CD8-positive, alpha-beta T cell (primary cell): ENCODE measurements at regions of chrX and their contacts with region 1.

Region 1: GRCh38 chrX:130902783-130903613 is at the start of gene ENOX2:
- DNase-seq: peak; percentile 50 to 94 (median 78)
- ATAC-seq: peak; percentile 95
- H3K4me3 ChIP-seq: peak within 1 kb of the TSS; percentile 84 to 94
- H3K4me3 Mint-ChIP-seq: no peak within 1 kb of the TSS
- H3K27ac ChIP-seq: peak within 1 kb of the TSS; percentile 60 to 87
- H3K27ac Mint-ChIP-seq: peak within 1 kb of the TSS; percentile 70
- H3K4me1 ChIP-seq: no peaks in the 10 kb centered on the region
- H3K4me1 Mint-ChIP-seq: peaks cover 13% of the 10 kb centered on the region
- H3K27me3 ChIP-seq: no peaks in the 10 kb centered on the region
- H3K27me3 Mint-ChIP-seq: no peaks in the 10 kb centered on the region
- CTCF ChIP-seq: no peak
- total RNA-seq, gene ENOX2: 4.0 to 4.6 TPM

Region 2: DNA sequence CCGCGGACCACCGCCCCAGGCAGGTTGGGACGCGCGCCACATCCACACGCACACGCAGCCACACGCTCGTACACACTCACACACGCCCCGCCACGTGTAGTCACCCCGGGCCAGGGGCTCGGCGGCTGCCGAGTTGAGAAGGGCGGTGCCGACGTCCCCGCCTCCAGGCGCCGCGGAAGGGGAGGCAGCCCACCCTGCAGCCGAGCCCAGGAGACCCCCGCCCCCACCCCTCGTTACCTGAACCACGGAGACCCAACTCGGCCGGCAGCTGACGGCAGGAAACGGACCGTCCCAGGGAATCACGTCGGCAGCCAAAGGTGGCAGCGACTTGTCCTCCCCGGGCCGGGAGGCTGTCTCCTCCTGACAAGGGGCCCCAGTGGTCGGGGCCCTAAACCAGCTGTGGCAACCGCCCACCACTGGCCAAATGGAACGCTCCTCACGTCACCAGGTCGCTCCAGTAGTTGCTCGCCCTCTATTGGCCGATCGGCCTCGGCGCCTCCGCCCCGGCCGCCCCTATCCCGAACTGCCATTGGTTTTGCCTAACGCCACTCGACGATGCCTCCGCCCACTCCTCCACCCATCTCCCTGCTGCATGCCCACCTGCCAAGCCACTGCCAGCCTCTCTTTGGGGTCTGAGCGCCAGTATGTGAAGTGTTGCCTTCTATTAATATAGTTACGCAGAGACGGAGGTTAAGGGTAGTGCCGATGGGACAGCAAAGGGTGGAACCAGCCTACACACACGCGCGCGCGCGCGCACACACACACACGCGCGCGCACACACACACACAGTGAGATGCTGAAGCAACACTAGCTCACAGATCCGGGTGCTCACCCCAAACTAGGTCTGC is 1059.3 kb before region 1 on chrX and contains the start of gene ZDHHC9:
- CTCF ChIA-PET with region 1: no interaction called
- POLR2A ChIA-PET with region 1: no interaction called
- intact Hi-C with region 1: loop called in 1 of 2 experiments (anchors 10 kb)
- DNase-seq: peak; percentile 70 to 91 (median 81)
- ATAC-seq: peak; percentile 96
- H3K4me3 ChIP-seq: peak within 1 kb of the TSS; percentile 67 to 73
- H3K4me3 Mint-ChIP-seq: peak within 1 kb of the TSS; percentile 86
- H3K27ac ChIP-seq: peak within 1 kb of the TSS; percentile 36 to 60
- H3K27ac Mint-ChIP-seq: peak within 1 kb of the TSS; percentile 64
- H3K4me1 ChIP-seq: peaks cover 24% of the 10 kb centered on the region
- H3K4me1 Mint-ChIP-seq: peaks cover 32% of the 10 kb centered on the region
- H3K27me3 ChIP-seq: no peaks in the 10 kb centered on the region
- H3K27me3 Mint-ChIP-seq: no peaks in the 10 kb centered on the region
- CTCF ChIP-seq: no peak
- total RNA-seq, gene ZDHHC9: 2.4 to 2.6 TPM

Region 3: GRCh38 chrX:130268500-130269170 is 634.4 kb before region 1 on chrX and contains the start of gene ZNF280C:
- CTCF ChIA-PET with region 1: no interaction called
- POLR2A ChIA-PET with region 1: no interaction called
- intact Hi-C with region 1: loop called (anchors 1 to 2 kb)
- DNase-seq: peak; percentile 76 to 94 (median 88)
- ATAC-seq: peak; percentile 94
- H3K4me3 ChIP-seq: peak within 1 kb of the TSS; percentile 73 to 74
- H3K4me3 Mint-ChIP-seq: peak within 1 kb of the TSS; percentile 88
- H3K27ac ChIP-seq: peak within 1 kb of the TSS; percentile 54 to 65
- H3K27ac Mint-ChIP-seq: peak within 1 kb of the TSS; percentile 85
- H3K4me1 ChIP-seq: peaks cover 14% of the 10 kb centered on the region
- H3K4me1 Mint-ChIP-seq: peaks cover 13% of the 10 kb centered on the region
- H3K27me3 ChIP-seq: no peaks in the 10 kb centered on the region
- H3K27me3 Mint-ChIP-seq: no peaks in the 10 kb centered on the region
- CTCF ChIP-seq: no peak
- total RNA-seq, gene ZNF280C: 4.4 to 5.2 TPM

Region 4: DNA sequence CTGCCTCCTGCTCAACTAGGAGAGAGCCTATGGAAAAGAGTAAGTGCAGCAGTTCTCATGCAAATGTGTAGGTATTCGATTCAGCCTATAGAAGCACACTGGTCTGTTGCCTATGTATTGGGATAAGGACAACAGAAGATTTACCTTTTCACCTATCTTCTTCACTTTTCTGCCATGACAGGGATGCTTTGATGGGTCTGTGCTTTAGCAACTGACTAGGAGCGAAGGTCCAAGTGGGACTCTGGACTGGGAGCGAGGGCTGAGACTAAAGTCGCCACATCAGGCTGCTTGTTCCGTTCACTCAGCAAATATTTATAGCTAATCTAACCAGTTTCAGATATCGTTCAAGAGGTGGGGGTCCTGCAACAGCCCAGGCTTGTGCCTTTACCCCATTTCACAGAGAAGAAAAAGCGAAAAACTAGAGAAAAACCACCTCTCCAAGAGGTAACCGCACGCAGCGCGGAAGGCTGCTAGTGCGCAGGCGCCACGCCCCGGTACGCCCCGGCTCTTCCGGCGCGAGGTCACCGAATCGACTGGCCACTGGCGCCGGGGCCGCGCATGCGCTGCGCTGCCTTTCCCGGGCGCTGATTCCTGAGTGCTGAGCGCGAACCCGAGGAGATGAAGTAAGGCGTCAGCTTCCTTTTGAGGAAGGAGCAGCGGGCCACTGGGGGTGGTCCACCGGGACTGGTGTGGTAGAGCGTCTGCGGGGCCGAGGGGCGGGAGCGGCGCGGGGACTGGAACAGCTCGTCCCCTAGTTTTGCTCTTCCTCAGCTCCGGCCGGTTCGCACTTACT is 501.4 kb before region 1 on chrX and contains the start of gene RBMX2:
- CTCF ChIA-PET with region 1: no interaction called
- POLR2A ChIA-PET with region 1: no interaction called
- intact Hi-C with region 1: loop called (anchors 1 to 5 kb)
- DNase-seq: peak; percentile 37 to 88 (median 68)
- ATAC-seq: peak; percentile 85
- H3K4me3 ChIP-seq: peak within 1 kb of the TSS; percentile 63 to 99
- H3K4me3 Mint-ChIP-seq: peak within 1 kb of the TSS; percentile 87
- H3K27ac ChIP-seq: peak within 1 kb of the TSS; percentile 73 to 76
- H3K27ac Mint-ChIP-seq: peak within 1 kb of the TSS; percentile 91
- H3K4me1 ChIP-seq: peaks cover 12% of the 10 kb centered on the region
- H3K4me1 Mint-ChIP-seq: peaks cover 27% of the 10 kb centered on the region
- H3K27me3 ChIP-seq: no peaks in the 10 kb centered on the region
- H3K27me3 Mint-ChIP-seq: no peaks in the 10 kb centered on the region
- CTCF ChIP-seq: no peak
- total RNA-seq, gene RBMX2: 19.4 to 20.7 TPM

Region 5: DNA sequence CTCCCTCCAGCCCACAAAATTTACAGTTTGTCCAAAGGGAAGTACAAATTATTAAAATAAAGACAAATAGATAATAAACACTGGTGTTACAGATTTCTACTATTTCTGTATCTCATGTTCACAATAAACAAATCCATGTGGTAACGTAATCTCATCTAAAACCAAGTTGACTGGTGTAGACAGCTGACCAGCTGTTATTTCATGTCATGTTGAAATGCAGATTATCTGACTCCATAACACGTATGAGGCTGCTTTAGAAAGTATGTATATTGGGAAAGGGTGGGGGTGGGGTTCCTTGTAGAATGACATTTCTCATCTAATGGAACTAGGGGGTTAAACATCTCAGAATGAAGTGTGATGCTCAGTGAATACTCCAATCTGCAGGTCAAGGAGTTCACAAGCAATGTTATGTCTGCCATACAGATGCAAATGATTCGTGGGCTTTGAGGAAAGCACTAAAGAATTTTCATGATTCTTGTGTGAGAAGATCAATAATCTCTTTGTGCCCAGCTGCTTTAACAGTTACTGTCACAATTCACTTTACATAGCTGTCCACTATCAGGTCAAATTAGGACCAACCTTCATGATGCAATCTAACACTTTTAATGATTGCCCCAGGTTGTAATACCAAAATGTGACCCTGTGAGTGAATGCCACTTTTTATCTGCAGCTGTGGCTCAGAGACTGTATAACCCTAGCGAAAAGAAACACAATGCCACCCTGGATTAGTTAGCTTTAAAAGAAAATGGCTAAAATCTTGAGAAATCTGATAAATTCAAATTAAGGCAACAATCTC is 114.0 kb before region 1 on chrX:
- CTCF ChIA-PET with region 1: no interaction called
- POLR2A ChIA-PET with region 1: no interaction called
- intact Hi-C with region 1: no loop called
- DNase-seq: no peak
- ATAC-seq: no peak
- H3K4me3 ChIP-seq: no peak overlapping the region
- H3K4me3 Mint-ChIP-seq: no peak overlapping the region
- H3K27ac ChIP-seq: no peak overlapping the region
- H3K27ac Mint-ChIP-seq: no peak overlapping the region
- H3K4me1 ChIP-seq: no peaks in the 10 kb centered on the region
- H3K4me1 Mint-ChIP-seq: no peaks in the 10 kb centered on the region
- H3K27me3 ChIP-seq: no peaks in the 10 kb centered on the region
- H3K27me3 Mint-ChIP-seq: no peaks in the 10 kb centered on the region
- CTCF ChIP-seq: no peak